HepG2 (cell line): ENCODE measurements at regions of chr14 and their contacts with region 1.

Region 1: GRCh38 chr14:95701846-95702221 is 12.1 kb downstream of the TCL1A start:
- DNase-seq: no peak
- ATAC-seq: no peak
- H3K4me3 ChIP-seq: no peak overlapping the region
- H3K27ac ChIP-seq: no peak overlapping the region
- H3K4me1 ChIP-seq: no peaks in the 10 kb centered on the region
- H3K27me3 ChIP-seq: peaks cover 0 to 2% of the 10 kb centered on the region in 2 experiments; a peak in 1 of 5 replicates
- CTCF ChIP-seq: no peak
- EP300 ChIP-seq: no peak
- POLR2A ChIP-seq: no peak
- RAD21 ChIP-seq: no peak

Region 2: GRCh38 chr14:95722525-95723190 is 20.8 kb after region 1 on chr14:
- CTCF ChIA-PET with region 1: no interaction called
- POLR2A ChIA-PET with region 1: no interaction called
- in situ Hi-C with region 1: no loop called
- intact Hi-C with region 1: no loop called
- DNase-seq: no peak
- ATAC-seq: no peak
- H3K4me3 ChIP-seq: no peak overlapping the region
- H3K27ac ChIP-seq: no peak overlapping the region
- H3K4me1 ChIP-seq: no peaks in the 10 kb centered on the region
- H3K27me3 ChIP-seq: peaks cover 0 to 4% of the 10 kb centered on the region in 2 experiments; a peak in 1 of 5 replicates
- CTCF ChIP-seq: no peak
- EP300 ChIP-seq: no peak
- POLR2A ChIP-seq: no peak
- RAD21 ChIP-seq: no peak

Region 3: GRCh38 chr14:95733212-95733611 is 31.4 kb after region 1 on chr14:
- CTCF ChIA-PET with region 1: no interaction called
- POLR2A ChIA-PET with region 1: no interaction called
- in situ Hi-C with region 1: no loop called
- intact Hi-C with region 1: loop called (anchors 1 kb)
- DNase-seq: no peak
- ATAC-seq: no peak
- H3K4me3 ChIP-seq: no peak overlapping the region
- H3K27ac ChIP-seq: no peak overlapping the region
- H3K4me1 ChIP-seq: no peaks in the 10 kb centered on the region
- H3K27me3 ChIP-seq: peaks cover 0 to 2% of the 10 kb centered on the region in 2 experiments; a peak in 3 of 5 replicates
- CTCF ChIP-seq: no peak
- EP300 ChIP-seq: no peak
- POLR2A ChIP-seq: no peak
- RAD21 ChIP-seq: no peak